ENCODE measurements at regions of chr1 and their contacts with region 1.

Region 1: GRCh38 chr1:211935448-211935970 is 99.8 kb downstream of the INTS7 start:
- DNase-seq: peak; percentile 97
- ATAC-seq: peak; percentile 84
- H3K4me3 ChIP-seq: peak overlapping the region; percentile 24; the same call in 1 of the 2 replicates
- H3K27ac ChIP-seq: peak overlapping the region; percentile 68
- H3K4me1 ChIP-seq: peaks cover 62% of the 10 kb centered on the region
- H3K27me3 ChIP-seq: no peaks in the 10 kb centered on the region
- CTCF ChIP-seq: no peak
- EP300 ChIP-seq: peak; percentile 87 to 94
- POLR2A ChIP-seq: no peak
- RAD21 ChIP-seq: 0 out of 2 replicates have a peak, but pooled peaks have one; percentile 4

Region 2: DNA sequence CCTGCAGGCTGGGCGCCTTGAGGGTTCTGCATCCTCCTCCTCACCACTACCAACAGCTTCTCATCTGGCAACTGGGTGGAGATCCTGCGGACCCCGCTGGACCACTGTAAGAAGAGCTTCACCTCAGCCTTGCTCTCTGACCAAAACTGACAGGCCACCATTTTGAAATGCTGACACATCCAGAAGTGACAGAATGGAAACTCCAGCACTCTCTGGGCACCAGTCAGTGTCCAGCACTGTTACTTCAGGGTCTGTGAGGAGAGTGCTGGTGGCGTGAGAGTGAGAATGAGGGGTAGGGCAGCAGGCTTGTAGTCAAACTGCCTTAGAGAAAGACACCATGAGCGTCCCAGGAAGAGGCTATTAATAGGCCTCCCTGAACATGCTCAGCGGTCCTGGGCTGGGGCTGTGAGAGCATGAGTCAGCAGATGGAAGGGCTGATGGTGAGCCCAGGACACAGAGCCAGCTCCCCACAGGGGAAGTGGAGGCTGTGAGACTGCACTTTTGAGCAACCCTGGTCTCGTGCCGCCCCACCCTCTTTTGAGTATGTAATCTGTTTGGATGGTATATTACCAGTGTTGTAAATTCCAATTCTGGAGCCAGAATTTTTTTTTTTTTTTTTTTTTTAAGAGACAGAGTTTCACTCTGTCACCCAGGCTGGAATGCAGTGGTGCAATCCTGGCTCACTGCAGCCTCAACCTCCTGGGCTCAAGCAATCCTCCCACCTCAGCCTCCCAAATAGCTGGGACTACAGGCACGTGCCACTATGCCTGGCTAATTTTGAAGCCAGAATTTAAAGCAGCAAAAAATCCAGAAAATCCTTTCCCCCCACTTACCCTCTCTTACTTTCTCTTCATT is 322.2 kb before region 1 on chr1:
- CTCF ChIA-PET with region 1: no interaction called
- POLR2A ChIA-PET with region 1: interaction called, 11 read pairs
- RAD21 ChIA-PET with region 1: no interaction called
- SMC1A ChIA-PET with region 1: no interaction called
- in situ Hi-C with region 1: no loop called
- intact Hi-C with region 1: no loop called
- DNase-seq: no peak
- ATAC-seq: peak; percentile 42
- H3K4me3 ChIP-seq: no peak overlapping the region
- H3K27ac ChIP-seq: no peak overlapping the region
- H3K4me1 ChIP-seq: no peaks in the 10 kb centered on the region; the same call in 1 of the 2 replicates
- H3K27me3 ChIP-seq: no peaks in the 10 kb centered on the region
- CTCF ChIP-seq: no peak
- EP300 ChIP-seq: no peak
- POLR2A ChIP-seq: no peak
- RAD21 ChIP-seq: no peak

Region 3: GRCh38 chr1:211910913-211911485 is 24.5 kb before region 1 on chr1:
- CTCF ChIA-PET with region 1: no interaction called
- POLR2A ChIA-PET with region 1: interaction called, 3 read pairs
- RAD21 ChIA-PET with region 1: no interaction called
- SMC1A ChIA-PET with region 1: interaction called, 10 read pairs
- in situ Hi-C with region 1: no loop called
- intact Hi-C with region 1: no loop called
- DNase-seq: no peak
- ATAC-seq: no peak
- H3K4me3 ChIP-seq: no peak overlapping the region
- H3K27ac ChIP-seq: no peak overlapping the region
- H3K4me1 ChIP-seq: peaks cover 12% of the 10 kb centered on the region
- H3K27me3 ChIP-seq: no peaks in the 10 kb centered on the region
- CTCF ChIP-seq: no peak
- EP300 ChIP-seq: no peak
- POLR2A ChIP-seq: no peak
- RAD21 ChIP-seq: no peak

Region 4: DNA sequence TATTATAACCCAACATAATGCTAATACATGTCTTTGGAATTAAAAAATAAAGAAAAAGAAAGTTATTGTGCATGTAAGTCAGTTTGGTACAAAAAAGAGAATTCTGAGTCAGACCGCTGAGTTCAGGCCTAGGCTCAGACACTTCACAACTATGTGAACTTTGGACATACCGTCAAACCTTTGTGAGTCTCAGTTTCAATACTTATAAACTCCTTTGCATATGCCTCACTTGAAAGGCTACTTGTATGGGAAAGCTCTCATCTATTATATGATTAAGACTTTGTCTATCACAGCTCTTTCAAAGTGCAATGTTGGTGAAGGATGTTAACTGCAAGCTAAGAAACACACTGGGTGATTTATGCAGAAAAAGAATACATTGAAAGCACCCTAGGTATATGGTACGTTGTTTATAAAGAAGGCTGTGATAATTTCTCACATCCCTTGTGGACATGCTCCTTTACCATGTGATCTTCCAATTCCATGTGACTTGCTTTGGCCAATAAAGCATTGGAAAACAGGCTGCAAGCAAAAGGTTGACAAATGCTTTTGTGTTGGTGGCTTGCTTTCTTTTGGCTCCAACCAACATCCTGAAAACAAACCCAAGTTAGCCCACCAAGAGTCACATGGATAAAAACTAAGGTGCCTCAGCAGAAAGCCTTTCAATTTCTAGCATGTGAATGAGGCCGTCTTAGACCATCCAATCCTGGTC is 50.2 kb after region 1 on chr1:
- CTCF ChIA-PET with region 1: interaction called, 5 read pairs
- POLR2A ChIA-PET with region 1: interaction called, 17 read pairs
- RAD21 ChIA-PET with region 1: interaction called, 57 read pairs
- SMC1A ChIA-PET with region 1: interaction called, 49 read pairs
- in situ Hi-C with region 1: no loop called
- intact Hi-C with region 1: loop called (anchors 5 kb)
- DNase-seq: peak; percentile 82
- ATAC-seq: peak; percentile 99
- H3K4me3 ChIP-seq: no peak overlapping the region
- H3K27ac ChIP-seq: peak overlapping the region; percentile 88
- H3K4me1 ChIP-seq: peaks cover 16% of the 10 kb centered on the region
- H3K27me3 ChIP-seq: no peaks in the 10 kb centered on the region
- CTCF ChIP-seq: no peak
- EP300 ChIP-seq: peak in 1 of 2 experiments; percentile 52; a peak in 1 of 4 replicates
- POLR2A ChIP-seq: no peak; the same call in 1 of the 2 replicates
- RAD21 ChIP-seq: no peak

Region 5: DNA sequence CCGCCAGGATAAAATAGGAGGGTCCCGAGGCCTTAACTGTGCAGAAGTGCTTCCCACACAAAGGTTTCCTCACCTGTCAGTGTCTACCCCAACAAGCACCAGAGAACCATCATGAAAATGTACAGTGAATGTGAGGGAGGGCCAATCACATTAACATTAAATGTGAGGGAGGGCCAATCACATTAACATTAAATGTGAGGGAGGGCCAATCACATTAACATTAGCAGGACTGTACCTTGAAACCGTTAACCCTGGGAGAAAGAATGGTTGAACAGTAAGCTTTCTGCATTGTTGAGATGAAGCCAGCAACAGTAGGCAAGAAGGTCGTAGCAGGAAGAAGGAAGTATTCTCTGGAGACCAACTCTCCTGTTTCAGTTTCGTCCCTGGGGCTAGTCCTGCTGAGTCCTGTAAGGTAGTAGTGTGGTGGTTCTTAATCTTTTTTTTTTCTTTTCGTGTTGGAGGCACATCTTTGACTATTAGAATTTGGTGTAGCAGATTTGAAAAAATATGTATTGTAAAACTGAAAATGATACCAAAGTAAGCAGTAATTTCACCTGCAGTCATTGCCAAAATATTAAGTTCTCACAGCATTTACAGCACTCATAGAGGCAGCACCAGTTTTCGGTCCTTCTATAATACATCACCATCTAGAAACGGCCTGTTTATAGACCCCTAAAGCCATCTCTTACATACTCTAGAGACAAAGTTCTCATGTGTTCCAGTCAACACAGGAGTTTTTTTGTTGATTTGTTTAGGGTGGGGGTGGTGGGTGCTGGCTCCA is 251.1 kb after region 1 on chr1:
- CTCF ChIA-PET with region 1: no interaction called
- POLR2A ChIA-PET with region 1: no interaction called
- RAD21 ChIA-PET with region 1: no interaction called
- SMC1A ChIA-PET with region 1: no interaction called
- in situ Hi-C with region 1: no loop called
- intact Hi-C with region 1: no loop called
- DNase-seq: peak; percentile 73
- ATAC-seq: peak; percentile 99
- H3K4me3 ChIP-seq: peak overlapping the region; percentile 39; the same call in 1 of the 2 replicates
- H3K27ac ChIP-seq: peak overlapping the region; percentile 58
- H3K4me1 ChIP-seq: peaks cover 12% of the 10 kb centered on the region
- H3K27me3 ChIP-seq: no peaks in the 10 kb centered on the region
- CTCF ChIP-seq: no peak
- EP300 ChIP-seq: no peak
- POLR2A ChIP-seq: 0 out of 2 replicates have a peak, but pooled peaks have one; percentile 23
- RAD21 ChIP-seq: no peak

Region 6: GRCh38 chr1:212291505-212292134 is 356.1 kb after region 1 on chr1:
- CTCF ChIA-PET with region 1: no interaction called
- POLR2A ChIA-PET with region 1: no interaction called
- RAD21 ChIA-PET with region 1: no interaction called
- SMC1A ChIA-PET with region 1: no interaction called
- in situ Hi-C with region 1: no loop called
- intact Hi-C with region 1: no loop called
- DNase-seq: no peak
- ATAC-seq: peak; percentile 87
- H3K4me3 ChIP-seq: peak overlapping the region; percentile 54; the same call in 1 of the 2 replicates
- H3K27ac ChIP-seq: no peak overlapping the region
- H3K4me1 ChIP-seq: peaks cover 18% of the 10 kb centered on the region
- H3K27me3 ChIP-seq: no peaks in the 10 kb centered on the region
- CTCF ChIP-seq: peak; percentile 63 to 87 (median 76); a peak in 5 of 6 replicates
- EP300 ChIP-seq: no peak
- POLR2A ChIP-seq: no peak
- RAD21 ChIP-seq: peak; percentile 93

Measured in GM12878 (cell line).